Right ventricle myocardium superior (tissue), 1 donor: ENCODE measurements at regions of chr4 and their contacts with region 1.

Region 1: DNA sequence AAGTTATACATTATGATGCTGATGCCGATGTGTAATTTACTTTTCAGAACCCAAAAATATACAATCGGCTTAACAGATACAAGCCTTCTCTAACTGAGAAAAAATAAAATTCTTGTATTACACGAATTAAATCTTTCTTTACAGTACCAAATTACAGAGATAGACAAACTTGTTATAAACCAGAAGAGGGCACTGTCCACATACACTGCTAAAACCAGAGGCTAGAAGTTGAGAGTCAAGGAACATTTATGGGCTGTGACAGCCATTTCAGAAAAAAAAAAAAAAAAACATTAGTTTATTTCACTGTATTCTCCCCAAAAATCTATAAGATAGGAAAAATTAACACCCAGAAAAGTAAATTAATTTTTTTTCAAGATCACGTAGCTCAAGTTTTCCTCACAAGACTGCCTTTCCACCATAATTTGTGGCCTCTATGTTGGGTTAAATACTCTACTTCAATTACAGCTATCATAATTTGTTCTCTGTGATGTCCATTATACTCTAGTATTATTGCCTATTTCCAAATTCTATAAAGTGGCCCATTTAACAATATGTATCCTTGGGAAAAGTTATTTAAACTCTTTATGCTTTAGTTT is 12.0 kb downstream of the EREG start:
- DNase-seq: no peak
- ATAC-seq: peak; percentile 88

Region 2: GRCh38 chr4:74531963-74532794 is 155.2 kb after region 1 on chr4:
- intact Hi-C with region 1: loop called (anchors 2 kb)
- DNase-seq: no peak
- ATAC-seq: peak; percentile 74